MCF 10A (cell line): ENCODE measurements at regions of chr7 and their contacts with region 1.

Region 1: DNA sequence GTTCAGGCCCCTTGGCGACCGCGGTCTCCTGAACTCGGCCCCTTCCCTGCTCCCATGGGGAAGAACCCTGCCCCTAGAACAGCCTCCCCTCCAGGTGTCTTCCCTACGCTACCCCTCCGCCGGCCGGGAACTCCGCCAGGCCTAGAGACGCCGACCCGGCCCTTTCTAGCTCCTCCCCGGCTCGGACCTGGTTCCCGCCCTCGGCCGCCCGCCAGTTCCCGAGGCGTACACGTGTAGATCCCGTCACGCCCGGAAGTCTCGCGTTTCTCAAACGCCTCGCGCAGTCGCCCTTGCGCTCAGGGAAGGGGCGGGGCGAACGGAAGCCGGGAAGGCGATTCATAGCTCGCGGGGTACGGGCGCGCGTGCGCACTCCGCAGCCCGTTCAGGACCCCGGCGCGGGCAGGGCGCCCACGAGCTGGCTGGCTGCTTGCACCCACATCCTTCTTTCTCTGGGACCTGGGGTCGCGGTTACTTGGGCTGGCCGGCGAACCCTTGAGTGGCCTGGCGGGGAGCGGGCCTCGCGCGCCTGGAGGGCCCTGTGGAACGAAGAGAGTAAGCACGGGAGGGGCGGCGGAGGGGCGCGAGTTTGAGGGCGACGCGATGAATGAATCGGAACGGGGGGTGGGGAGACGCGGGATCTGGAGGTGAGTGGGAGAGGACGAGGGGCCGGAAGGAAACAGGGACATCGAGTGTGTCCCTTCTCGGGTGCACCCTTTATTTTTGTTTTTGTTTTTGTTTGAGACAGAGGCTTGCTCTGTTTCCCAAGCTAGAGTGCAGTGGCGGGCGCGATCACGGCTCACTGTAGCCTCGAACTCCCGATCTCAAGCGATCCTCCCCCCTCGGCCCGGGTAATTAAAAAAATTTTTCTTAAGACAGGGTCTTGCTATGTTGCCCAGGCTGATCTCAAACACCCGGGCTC is at the start of gene POP7:
- DNase-seq: peak; percentile 98
- H3K4me3 Mint-ChIP-seq: peak within 1 kb of the TSS; percentile 95
- H3K27ac Mint-ChIP-seq: peak within 1 kb of the TSS; percentile 93
- H3K4me1 Mint-ChIP-seq: peaks cover 10% of the 10 kb centered on the region
- H3K27me3 Mint-ChIP-seq: peaks cover 10% of the 10 kb centered on the region
- CTCF ChIP-seq: no peak
- total RNA-seq, gene POP7: 49.0 and 59.2 TPM in 2 replicates

Region 2: GRCh38 chr7:100358027-100358865 is 347.8 kb before region 1 on chr7 and contains the start of gene PILRB:
- CTCF ChIA-PET with region 1: no interaction called
- POLR2A ChIA-PET with region 1: no interaction called
- intact Hi-C with region 1: no loop called
- DNase-seq: no peak
- H3K4me3 Mint-ChIP-seq: no peak within 1 kb of the TSS
- H3K27ac Mint-ChIP-seq: no peak within 1 kb of the TSS
- H3K4me1 Mint-ChIP-seq: no peaks in the 10 kb centered on the region
- H3K27me3 Mint-ChIP-seq: no peaks in the 10 kb centered on the region
- CTCF ChIP-seq: no peak
- total RNA-seq, gene PILRB: 39.8 and 56.2 TPM in 2 replicates

Region 3: GRCh38 chr7:100520138-100520537 is 185.9 kb before region 1 on chr7:
- CTCF ChIA-PET with region 1: no interaction called
- POLR2A ChIA-PET with region 1: no interaction called
- intact Hi-C with region 1: no loop called
- DNase-seq: no peak
- H3K4me3 Mint-ChIP-seq: no peak overlapping the region
- H3K27ac Mint-ChIP-seq: no peak overlapping the region
- H3K4me1 Mint-ChIP-seq: peaks cover 11% of the 10 kb centered on the region
- H3K27me3 Mint-ChIP-seq: no peaks in the 10 kb centered on the region
- CTCF ChIP-seq: no peak

Region 4: DNA sequence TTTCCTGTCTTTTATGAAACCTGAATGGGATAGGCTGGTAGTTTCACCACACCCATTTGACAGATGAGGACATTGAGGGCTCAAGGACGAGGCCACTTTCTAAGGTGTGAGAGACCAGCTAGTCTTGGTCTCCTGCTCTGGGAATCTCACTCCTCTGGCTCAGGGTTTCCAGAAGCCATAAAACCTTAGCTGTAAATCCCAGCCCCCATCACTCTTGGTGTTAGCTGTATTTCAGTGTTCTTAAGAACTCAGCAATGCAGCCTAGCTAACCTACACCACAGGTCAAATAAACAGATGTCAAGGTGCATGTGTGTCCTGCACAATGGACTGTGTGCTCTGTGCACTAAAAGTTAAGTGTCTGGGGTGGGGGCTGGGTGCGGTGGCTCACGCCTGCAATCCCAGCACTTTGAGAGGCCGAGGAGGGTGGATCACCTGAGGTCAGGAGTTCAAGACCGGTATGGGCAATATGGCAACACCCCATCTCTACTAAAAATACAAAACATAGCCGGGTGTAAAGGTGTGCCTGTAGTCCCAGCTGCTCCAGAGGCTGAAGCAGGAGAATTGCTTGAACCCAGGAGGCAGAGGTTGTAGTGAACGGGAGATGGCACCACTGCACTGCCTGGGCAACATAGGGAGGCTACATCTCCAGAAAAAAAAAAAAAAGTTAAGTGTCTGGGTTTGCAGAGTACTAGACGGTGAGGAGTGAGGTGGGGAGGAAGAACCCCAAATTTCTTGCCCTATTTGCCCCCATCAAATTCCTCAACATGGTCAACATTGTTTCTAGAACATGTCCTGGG is 13.7 kb after region 1 on chr7:
- CTCF ChIA-PET with region 1: interaction called, 23 read pairs
- POLR2A ChIA-PET with region 1: interaction called, 14 read pairs
- intact Hi-C with region 1: no loop called
- DNase-seq: peak; percentile 27
- H3K4me3 Mint-ChIP-seq: no peak overlapping the region
- H3K27ac Mint-ChIP-seq: no peak overlapping the region
- H3K4me1 Mint-ChIP-seq: no peaks in the 10 kb centered on the region
- H3K27me3 Mint-ChIP-seq: peaks cover 48% of the 10 kb centered on the region
- CTCF ChIP-seq: peak; percentile 61

Region 5: GRCh38 chr7:100803398-100804233 is 97.6 kb after region 1 on chr7:
- CTCF ChIA-PET with region 1: interaction called, 7 read pairs
- POLR2A ChIA-PET with region 1: interaction called, 28 read pairs
- intact Hi-C with region 1: loop called (anchors 2 kb)
- DNase-seq: peak; percentile 95
- H3K4me3 Mint-ChIP-seq: peak overlapping the region; percentile 45
- H3K27ac Mint-ChIP-seq: peak overlapping the region; percentile 59
- H3K4me1 Mint-ChIP-seq: peaks cover 38% of the 10 kb centered on the region
- H3K27me3 Mint-ChIP-seq: no peaks in the 10 kb centered on the region
- CTCF ChIP-seq: no peak

Region 6: GRCh38 chr7:100837099-100837836 is 131.3 kb after region 1 on chr7:
- CTCF ChIA-PET with region 1: interaction called, 10 read pairs
- POLR2A ChIA-PET with region 1: interaction called, 5 read pairs
- intact Hi-C with region 1: no loop called
- DNase-seq: peak; percentile 93
- H3K4me3 Mint-ChIP-seq: peak overlapping the region; percentile 65
- H3K27ac Mint-ChIP-seq: peak overlapping the region; percentile 75
- H3K4me1 Mint-ChIP-seq: peaks cover 10% of the 10 kb centered on the region
- H3K27me3 Mint-ChIP-seq: no peaks in the 10 kb centered on the region
- CTCF ChIP-seq: no peak

Region 7: DNA sequence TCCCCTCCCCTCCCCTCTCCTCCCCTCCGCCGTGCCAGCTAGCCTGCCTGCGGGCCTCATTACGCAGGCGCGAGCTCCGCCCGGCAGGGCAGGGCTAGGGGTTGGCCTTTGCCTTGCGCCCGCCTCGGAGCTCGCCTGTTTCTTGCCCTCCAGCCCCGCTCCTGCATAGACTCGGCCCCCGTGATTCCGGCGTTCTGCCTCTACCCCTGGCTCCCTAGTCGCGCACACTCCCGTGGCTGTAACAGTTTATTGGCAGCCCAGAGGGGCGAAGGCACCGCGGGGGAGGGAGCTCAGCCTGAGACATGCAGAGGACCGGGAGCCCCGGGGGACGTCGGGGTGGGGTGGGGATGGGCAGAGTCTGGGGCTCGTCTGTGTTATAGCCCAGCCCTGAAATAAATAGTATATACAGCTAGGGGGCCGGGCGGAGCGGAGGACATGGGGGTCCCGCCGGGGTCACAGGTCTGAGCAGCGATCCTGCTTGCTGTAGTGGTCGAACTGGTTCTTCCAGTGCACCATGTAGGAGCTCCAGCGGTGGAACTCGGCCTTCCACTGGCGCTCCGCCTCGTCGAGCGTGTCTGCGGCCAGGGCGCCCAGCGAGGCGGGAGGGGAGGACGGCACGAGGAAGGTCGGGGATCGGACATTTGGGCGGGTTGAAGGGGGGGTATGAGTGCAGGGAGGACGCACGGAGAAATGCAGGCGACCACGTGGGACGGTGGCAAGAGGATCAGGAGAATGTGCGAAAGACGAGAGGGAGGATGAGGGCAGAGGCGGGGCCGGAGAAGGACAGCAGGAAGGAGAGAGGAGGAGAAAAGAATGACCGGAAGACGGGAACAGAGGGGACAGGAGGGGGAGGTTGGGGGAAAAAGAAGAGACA is 184.0 kb after region 1 on chr7:
- CTCF ChIA-PET with region 1: interaction called, 4 read pairs
- POLR2A ChIA-PET with region 1: interaction called, 22 read pairs
- intact Hi-C with region 1: no loop called
- DNase-seq: peak; percentile 92
- H3K4me3 Mint-ChIP-seq: peak overlapping the region; percentile 90
- H3K27ac Mint-ChIP-seq: peak overlapping the region; percentile 83
- H3K4me1 Mint-ChIP-seq: peaks cover 22% of the 10 kb centered on the region
- H3K27me3 Mint-ChIP-seq: no peaks in the 10 kb centered on the region
- CTCF ChIP-seq: no peak